ENCODE measurements at regions of chr20 and their contacts with region 1.

Region 1: DNA sequence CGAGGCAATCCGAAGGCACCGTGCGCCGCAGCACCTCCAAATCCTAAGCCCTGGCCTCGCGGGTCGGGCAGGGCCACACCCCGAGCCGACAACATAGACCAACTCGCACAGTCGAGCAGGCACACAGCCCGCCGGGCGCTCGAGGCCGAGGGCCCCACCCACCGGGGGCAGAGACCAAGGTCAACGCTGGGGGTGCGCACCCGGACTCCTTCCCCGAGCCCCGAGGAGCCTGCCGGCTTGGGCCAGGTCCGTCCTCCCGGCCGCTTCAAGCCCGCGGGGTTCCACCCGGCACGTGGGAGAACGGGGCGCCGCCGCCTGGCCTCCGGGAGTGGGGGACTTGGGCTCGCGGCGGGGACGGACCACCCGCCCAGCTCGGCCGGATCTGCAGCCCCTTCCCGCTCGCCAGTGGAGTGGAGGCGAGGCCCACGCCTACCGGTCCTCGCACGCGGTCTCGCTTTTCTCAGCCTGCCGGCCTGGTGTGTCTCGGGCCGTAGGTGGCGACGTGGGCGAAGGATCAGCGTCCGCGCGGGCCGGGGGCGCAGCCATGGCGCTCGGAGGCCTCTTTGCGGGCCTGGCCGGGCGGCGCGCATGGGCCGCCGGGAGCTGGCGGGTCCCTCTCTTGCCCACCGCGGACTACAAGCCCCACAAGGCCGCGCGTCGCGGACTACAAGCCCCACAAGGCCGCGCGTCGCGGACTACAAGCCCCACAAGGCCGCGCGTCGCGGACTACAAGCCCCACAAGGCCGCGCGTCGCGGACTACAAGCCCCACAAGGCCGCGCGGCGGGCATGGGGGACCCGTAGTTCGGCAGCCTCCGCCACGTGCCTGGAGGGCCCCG is at the start of gene UCKL1:
- DNase-seq: no peak
- ATAC-seq: peak; percentile 87
- H3K4me3 ChIP-seq: peak within 1 kb of the TSS; percentile 81
- H3K27ac ChIP-seq: peak within 1 kb of the TSS; percentile 83
- H3K4me1 ChIP-seq: peaks cover 10% of the 10 kb centered on the region
- H3K27me3 ChIP-seq: no peaks in the 10 kb centered on the region
- CTCF ChIP-seq: no peak; a peak in 1 of 6 replicates
- EP300 ChIP-seq: no peak
- POLR2A ChIP-seq: peak; percentile 91
- RAD21 ChIP-seq: no peak
- polyA plus RNA-seq, gene UCKL1: 2.4 to 7.9 TPM

Region 2: GRCh38 chr20:63896264-63897105 is 59.6 kb before region 1 on chr20:
- CTCF ChIA-PET with region 1: interaction called, 3 read pairs
- POLR2A ChIA-PET with region 1: no interaction called
- RAD21 ChIA-PET with region 1: no interaction called
- SMC1A ChIA-PET with region 1: no interaction called
- in situ Hi-C with region 1: no loop called
- intact Hi-C with region 1: loop called (anchors 1 kb)
- DNase-seq: no peak
- ATAC-seq: peak; percentile 83
- H3K4me3 ChIP-seq: peak overlapping the region; percentile 86
- H3K27ac ChIP-seq: peak overlapping the region; percentile 84
- H3K4me1 ChIP-seq: peaks cover 7% of the 10 kb centered on the region
- H3K27me3 ChIP-seq: no peaks in the 10 kb centered on the region
- CTCF ChIP-seq: no peak
- EP300 ChIP-seq: no peak
- POLR2A ChIP-seq: peak; percentile 61
- RAD21 ChIP-seq: 0 out of 2 replicates have a peak, but pooled peaks have one; percentile 8

Region 3: DNA sequence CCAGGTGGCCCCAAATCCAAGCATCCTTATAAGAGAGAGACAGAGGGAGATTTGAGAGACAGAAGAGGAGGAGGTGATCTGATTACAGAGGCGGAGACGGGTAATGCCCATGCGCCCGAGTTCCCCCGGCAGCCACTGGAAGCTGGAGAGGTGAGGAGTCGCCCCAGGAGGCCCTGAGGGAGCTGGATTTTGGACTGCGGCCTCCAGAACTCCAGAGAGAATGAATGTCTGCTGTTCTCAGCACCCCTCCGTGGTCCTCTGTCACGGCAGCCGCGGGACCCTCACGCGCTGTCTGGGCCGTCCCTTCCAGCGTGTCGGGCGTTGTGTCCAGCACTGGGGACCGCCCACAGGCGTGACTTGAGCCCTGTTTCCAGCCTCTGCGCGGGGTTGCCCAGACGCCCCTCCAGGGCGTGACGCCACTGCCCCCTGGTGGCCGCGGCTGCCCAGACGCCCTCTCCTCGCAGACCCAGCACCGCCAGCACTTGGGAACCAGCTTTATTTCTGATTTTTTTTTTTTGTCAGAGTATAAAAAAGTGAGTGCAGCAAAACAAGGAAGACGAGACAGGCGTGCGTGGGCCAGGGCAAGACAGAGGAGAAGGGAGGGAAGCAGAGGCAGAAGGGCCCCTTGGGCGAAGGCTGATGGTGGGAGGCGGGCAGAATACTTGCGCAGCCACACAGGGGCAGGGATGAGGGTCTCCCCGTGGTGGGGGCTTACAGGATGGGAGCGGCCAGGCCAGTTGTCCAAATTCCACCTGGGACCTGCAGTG is 17.8 kb after region 1 on chr20:
- CTCF ChIA-PET with region 1: interaction called, 12 read pairs
- POLR2A ChIA-PET with region 1: interaction called, 11 read pairs
- RAD21 ChIA-PET with region 1: interaction called, 6 read pairs
- SMC1A ChIA-PET with region 1: interaction called, 7 read pairs
- in situ Hi-C with region 1: no loop called
- intact Hi-C with region 1: loop called (anchors 2 kb)
- DNase-seq: no peak
- ATAC-seq: peak; percentile 76
- H3K4me3 ChIP-seq: no peak overlapping the region
- H3K27ac ChIP-seq: no peak overlapping the region; the same call in 1 of the 2 replicates
- H3K4me1 ChIP-seq: peaks cover 21% of the 10 kb centered on the region
- H3K27me3 ChIP-seq: no peaks in the 10 kb centered on the region
- CTCF ChIP-seq: peak; percentile 89 to 97 (median 95)
- EP300 ChIP-seq: no peak
- POLR2A ChIP-seq: peak; percentile 68
- RAD21 ChIP-seq: peak; percentile 77

Measured in GM12878 (cell line).